Caco-2 (cell line): ENCODE measurements at regions of chr10 and their contacts with region 1.

Region 1: DNA sequence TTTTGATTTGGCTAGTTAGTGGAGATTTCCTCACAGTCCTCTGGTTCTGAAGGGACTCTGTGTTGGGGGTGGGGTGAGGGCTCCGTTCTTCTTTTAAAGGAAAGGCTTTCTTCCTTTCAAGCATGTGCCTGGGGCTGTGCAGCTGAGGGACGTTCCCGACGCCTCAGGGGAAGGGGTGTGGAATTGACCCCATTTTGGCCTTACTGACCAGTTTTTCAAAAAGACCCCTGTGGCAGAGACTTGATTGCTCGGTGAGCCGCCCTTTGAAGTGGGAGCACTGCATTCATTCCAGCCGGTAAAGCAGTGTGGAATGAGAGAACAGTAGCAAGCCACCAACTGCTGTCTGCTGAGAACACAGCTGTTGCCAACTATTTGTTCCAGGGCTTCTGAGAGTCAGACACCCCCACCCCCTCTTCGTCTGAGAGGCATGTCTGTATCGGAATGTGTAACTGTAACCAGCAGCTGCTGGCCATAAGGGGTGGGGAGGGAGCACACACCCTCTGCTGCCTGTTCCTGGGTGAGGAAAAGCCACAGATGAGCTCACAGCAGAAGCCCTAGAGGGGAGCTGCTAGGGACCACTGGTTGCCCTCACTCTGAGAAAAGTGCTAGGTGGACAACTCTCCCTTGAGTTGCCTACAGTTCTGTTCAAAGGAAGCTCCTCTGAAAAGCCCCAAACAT is 33.2 kb downstream of the WBP1L start:
- DNase-seq: peak; percentile 82 to 89
- H3K4me3 ChIP-seq: no peak overlapping the region
- H3K4me3 Mint-ChIP-seq: peak overlapping the region; percentile 62
- H3K27ac Mint-ChIP-seq: peak overlapping the region; percentile 90
- H3K4me1 ChIP-seq: peaks cover 54% of the 10 kb centered on the region
- H3K4me1 Mint-ChIP-seq: peaks cover 43% of the 10 kb centered on the region
- H3K27me3 ChIP-seq: no peaks in the 10 kb centered on the region
- H3K27me3 Mint-ChIP-seq: no peaks in the 10 kb centered on the region
- CTCF ChIP-seq: no peak

Region 2: DNA sequence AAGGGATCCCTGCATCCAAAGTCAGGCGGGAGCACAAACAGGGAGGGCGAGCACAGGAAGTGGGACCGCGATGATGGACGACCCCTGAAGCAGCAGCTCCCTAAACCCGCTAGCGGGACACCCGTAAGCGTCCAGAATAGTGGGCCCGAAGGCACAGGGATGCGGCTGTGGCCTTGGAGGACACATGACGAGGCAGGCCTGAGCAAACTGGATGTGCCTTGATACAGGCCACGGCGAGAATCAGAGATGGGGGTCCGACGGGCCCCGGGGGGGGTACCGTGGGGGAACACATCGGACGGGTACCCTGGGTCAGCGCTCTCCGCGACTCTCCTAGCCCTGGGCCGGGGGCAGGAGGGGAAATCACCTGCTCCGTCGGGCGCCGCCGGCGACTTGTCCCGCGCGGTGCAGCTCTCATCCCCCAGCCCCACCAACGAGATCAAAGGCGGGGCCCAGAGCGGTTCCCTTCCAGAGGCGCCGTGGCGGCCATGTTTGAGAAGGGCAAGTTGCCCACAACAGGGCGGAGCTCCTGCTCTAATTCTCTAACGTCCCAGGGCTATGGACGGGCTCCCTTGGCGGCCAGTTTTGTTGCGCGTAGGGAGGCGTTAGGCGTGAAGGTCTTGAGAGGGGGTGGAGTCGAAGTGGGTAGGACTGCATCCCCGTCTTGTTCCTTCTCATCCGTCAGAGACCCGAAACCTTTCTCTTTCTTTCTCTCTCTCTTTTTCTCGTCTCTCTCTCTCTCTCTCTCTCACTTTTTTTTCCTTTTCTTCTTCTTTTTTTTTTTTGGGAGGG is 344.6 kb before region 1 on chr10 and contains the start of gene CUEDC2:
- CTCF ChIA-PET with region 1: no interaction called
- POLR2A ChIA-PET with region 1: no interaction called
- intact Hi-C with region 1: no loop called
- DNase-seq: peak; percentile 97 to 98
- H3K4me3 ChIP-seq: peak within 1 kb of the TSS; percentile 77
- H3K4me3 Mint-ChIP-seq: peak within 1 kb of the TSS; percentile 73
- H3K27ac Mint-ChIP-seq: peak within 1 kb of the TSS; percentile 65
- H3K4me1 ChIP-seq: peaks cover 11% of the 10 kb centered on the region
- H3K4me1 Mint-ChIP-seq: peaks cover 32% of the 10 kb centered on the region
- H3K27me3 ChIP-seq: no peaks in the 10 kb centered on the region
- H3K27me3 Mint-ChIP-seq: no peaks in the 10 kb centered on the region
- CTCF ChIP-seq: no peak
- total RNA-seq, gene CUEDC2: 32.1 and 32.6 TPM in 2 replicates

Region 3: DNA sequence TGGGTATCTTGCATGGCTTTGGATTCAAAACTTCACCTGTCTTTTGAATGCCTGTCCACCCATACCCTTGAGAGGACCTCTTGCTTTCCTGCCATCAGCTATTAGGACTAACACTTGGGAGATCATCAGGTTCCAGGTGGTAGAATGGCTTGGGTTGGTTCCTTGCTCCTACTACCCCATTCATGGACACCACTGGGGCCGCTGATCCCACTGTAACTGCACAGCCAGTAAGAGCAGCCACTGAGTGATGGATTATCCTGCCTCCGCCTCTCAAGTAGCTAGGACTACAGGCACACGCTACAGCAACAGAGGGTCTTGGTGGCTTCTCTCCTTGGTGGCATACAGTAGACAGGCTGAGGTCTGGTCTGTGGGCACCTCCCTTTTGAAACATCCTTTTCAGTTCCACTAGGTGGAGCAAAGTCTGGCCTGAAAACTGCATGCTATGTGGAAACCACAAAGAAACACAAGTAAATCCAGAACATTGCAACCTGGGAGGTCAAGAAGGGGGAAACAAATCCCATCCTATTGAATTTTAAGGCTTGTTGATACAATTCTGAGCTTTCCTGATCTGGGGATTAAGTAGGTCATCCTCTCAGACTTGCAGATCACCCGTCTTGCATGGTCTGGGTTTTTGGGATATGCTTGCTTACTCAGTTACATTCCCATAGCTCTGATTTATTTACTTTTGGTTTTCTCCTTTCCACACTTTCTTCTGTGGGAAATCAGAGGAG is 23.8 kb before region 1 on chr10:
- CTCF ChIA-PET with region 1: interaction called, 20 read pairs
- POLR2A ChIA-PET with region 1: interaction called, 3 read pairs
- intact Hi-C with region 1: loop called (anchors 1 kb)
- DNase-seq: peak in 1 of 2 experiments; percentile 55
- H3K4me3 ChIP-seq: no peak overlapping the region
- H3K4me3 Mint-ChIP-seq: no peak overlapping the region
- H3K27ac Mint-ChIP-seq: no peak overlapping the region
- H3K4me1 ChIP-seq: peaks cover 17% of the 10 kb centered on the region
- H3K4me1 Mint-ChIP-seq: peaks cover 11% of the 10 kb centered on the region
- H3K27me3 ChIP-seq: no peaks in the 10 kb centered on the region
- H3K27me3 Mint-ChIP-seq: no peaks in the 10 kb centered on the region
- CTCF ChIP-seq: peak; percentile 66 to 70

Region 4: DNA sequence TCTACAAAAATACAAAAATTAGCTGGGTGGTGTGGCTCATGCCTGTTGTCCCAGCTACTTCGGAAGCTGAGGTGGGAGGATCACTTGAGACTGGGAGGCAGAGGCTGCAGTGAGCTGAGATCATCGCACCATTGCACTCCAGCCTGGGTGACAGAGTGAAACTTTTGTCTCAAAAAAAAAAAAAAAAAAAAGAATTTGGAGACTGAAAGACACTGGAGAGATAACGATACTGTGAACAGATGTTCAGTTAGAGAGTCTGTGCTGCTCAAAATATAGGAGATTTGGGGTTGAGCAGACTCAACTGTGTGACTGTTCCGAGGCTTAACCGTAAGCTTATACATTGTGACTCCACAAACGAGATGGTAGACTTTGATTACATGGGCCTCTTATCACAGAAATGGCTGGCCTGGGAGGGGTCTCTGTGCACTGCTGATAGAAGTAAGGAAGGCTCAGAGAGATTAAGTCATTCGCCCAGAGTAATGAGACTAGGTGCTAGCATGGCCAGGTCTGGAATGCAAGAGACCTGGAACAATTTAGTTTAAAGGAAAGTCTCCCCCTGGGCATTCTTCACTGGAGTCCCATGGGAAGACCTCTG is 13.8 kb before region 1 on chr10:
- CTCF ChIA-PET with region 1: interaction called, 6 read pairs
- POLR2A ChIA-PET with region 1: interaction called, 6 read pairs
- intact Hi-C with region 1: loop called (anchors 2 kb)
- DNase-seq: no peak
- H3K4me3 ChIP-seq: no peak overlapping the region
- H3K4me3 Mint-ChIP-seq: no peak overlapping the region
- H3K27ac Mint-ChIP-seq: peak overlapping the region; percentile 81
- H3K4me1 ChIP-seq: peaks cover 47% of the 10 kb centered on the region
- H3K4me1 Mint-ChIP-seq: peaks cover 26% of the 10 kb centered on the region
- H3K27me3 ChIP-seq: no peaks in the 10 kb centered on the region
- H3K27me3 Mint-ChIP-seq: no peaks in the 10 kb centered on the region
- CTCF ChIP-seq: no peak

Region 5: DNA sequence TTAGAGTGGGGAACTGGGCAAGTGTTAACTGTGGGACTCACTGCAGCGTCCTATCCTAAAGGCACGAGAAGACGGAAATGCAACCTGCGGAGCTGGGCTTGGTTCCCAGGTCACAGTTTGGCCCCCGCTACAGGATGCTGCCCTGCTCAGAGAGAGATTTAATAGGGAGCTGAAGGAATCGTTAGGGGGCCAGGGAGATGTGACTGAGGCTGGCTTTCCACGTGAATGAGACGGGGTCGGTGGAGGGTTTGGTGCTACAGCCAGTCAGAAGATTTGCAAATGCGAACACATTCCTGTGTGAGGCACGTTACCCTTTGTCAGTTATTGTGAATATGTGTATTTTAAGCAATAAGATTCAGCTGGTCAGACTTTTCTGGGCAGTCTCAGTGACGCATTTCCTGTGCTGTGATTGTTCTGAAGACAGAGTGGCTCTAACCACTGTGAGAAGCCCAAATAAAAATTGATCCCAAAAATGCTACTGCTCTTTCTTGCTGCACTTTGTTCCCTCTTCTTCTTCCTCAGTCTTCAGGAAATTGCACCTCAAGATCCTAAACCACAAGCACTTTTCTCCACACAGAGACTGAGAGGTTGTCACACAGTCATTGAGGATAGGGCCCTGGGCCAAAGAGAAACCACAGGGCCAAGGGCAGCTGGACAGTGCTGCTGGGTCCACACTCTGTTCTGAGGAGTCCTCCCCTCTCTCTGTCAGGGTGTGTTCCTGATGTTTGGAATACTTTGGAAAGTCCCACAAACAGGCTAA is 39.1 kb after region 1 on chr10:
- CTCF ChIA-PET with region 1: no interaction called
- POLR2A ChIA-PET with region 1: interaction called, 4 read pairs
- intact Hi-C with region 1: loop called (anchors 2 kb)
- DNase-seq: no peak
- H3K4me3 ChIP-seq: no peak overlapping the region
- H3K4me3 Mint-ChIP-seq: no peak overlapping the region
- H3K27ac Mint-ChIP-seq: no peak overlapping the region
- H3K4me1 ChIP-seq: peaks cover 21% of the 10 kb centered on the region
- H3K4me1 Mint-ChIP-seq: peaks cover 7% of the 10 kb centered on the region
- H3K27me3 ChIP-seq: no peaks in the 10 kb centered on the region
- H3K27me3 Mint-ChIP-seq: no peaks in the 10 kb centered on the region
- CTCF ChIP-seq: no peak

Region 6: DNA sequence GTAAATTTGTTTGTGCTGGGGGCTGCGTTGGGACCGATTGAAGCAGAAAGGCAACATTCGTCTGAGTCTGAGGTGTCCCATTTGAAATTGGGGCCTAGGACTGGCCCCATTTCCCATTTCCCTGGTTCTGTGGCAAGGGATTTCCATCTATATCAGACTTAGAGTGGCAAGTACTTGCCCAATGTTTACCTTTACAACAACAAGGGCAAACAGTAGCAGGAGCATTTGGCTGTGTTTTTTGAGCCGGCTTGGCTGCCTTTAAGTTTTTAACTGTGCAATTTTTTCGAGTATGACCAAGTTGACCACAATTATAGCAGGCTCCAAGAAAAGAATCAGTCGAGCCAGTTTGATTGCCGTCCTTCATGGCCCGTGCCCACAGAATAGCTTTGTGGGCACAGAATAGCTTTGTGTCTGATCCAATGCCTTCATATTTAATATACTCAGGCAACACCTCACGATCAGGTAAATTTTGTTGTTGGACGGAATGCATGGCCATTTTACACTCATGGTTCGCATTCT is 65.0 kb after region 1 on chr10:
- CTCF ChIA-PET with region 1: no interaction called
- POLR2A ChIA-PET with region 1: no interaction called
- intact Hi-C with region 1: no loop called
- DNase-seq: no peak
- H3K4me3 ChIP-seq: no peak overlapping the region
- H3K4me3 Mint-ChIP-seq: no peak overlapping the region
- H3K27ac Mint-ChIP-seq: no peak overlapping the region
- H3K4me1 ChIP-seq: peaks cover 7% of the 10 kb centered on the region; the same call in 1 of the 2 replicates
- H3K4me1 Mint-ChIP-seq: peaks cover 6% of the 10 kb centered on the region
- H3K27me3 ChIP-seq: no peaks in the 10 kb centered on the region
- H3K27me3 Mint-ChIP-seq: no peaks in the 10 kb centered on the region
- CTCF ChIP-seq: no peak